Psoas muscle (tissue), 8 donors: ENCODE measurements at regions of chr11 and their contacts with region 1.

Region 1: GRCh38 chr11:63916837-63917691 is at the start of gene RCOR2:
- DNase-seq: peak; percentile 80 to 88
- ATAC-seq: peak; percentile 48 to 71 (median 68)
- H3K4me3 ChIP-seq: peak within 1 kb of the TSS; percentile 73
- H3K27ac ChIP-seq: peak within 1 kb of the TSS; percentile 85
- H3K4me1 ChIP-seq: peaks cover 33% of the 10 kb centered on the region
- H3K27me3 ChIP-seq: no peaks in the 10 kb centered on the region
- CTCF ChIP-seq: no peak
- total RNA-seq, gene RCOR2: 0.25 to 2.1 (median 0.47) TPM

Region 2: GRCh38 chr11:63871962-63872799 is 44.9 kb before region 1 on chr11:
- intact Hi-C with region 1: loop called in 1 of 2 experiments (anchors 5 kb)
- DNase-seq: peak; percentile 78 to 87
- ATAC-seq: peak; percentile 95 to 98 (median 96)
- H3K4me3 ChIP-seq: peak overlapping the region; percentile 39
- H3K27ac ChIP-seq: peak overlapping the region; percentile 77
- H3K4me1 ChIP-seq: peaks cover 60% of the 10 kb centered on the region
- H3K27me3 ChIP-seq: no peaks in the 10 kb centered on the region
- CTCF ChIP-seq: peak; percentile 50

Region 3: GRCh38 chr11:63938479-63939396 is 21.7 kb after region 1 on chr11 and contains the start of gene NAA40:
- intact Hi-C with region 1: loop called in 1 of 2 experiments (anchors 2 kb)
- DNase-seq: peak; percentile 91 to 96
- ATAC-seq: peak; percentile 94 to 98 (median 96)
- H3K4me3 ChIP-seq: peak within 1 kb of the TSS; percentile 79
- H3K27ac ChIP-seq: peak within 1 kb of the TSS; percentile 82
- H3K4me1 ChIP-seq: peaks cover 7% of the 10 kb centered on the region
- H3K27me3 ChIP-seq: no peaks in the 10 kb centered on the region
- CTCF ChIP-seq: no peak
- total RNA-seq, gene NAA40: 5.4 to 13.7 (median 7.8) TPM

Region 4: DNA sequence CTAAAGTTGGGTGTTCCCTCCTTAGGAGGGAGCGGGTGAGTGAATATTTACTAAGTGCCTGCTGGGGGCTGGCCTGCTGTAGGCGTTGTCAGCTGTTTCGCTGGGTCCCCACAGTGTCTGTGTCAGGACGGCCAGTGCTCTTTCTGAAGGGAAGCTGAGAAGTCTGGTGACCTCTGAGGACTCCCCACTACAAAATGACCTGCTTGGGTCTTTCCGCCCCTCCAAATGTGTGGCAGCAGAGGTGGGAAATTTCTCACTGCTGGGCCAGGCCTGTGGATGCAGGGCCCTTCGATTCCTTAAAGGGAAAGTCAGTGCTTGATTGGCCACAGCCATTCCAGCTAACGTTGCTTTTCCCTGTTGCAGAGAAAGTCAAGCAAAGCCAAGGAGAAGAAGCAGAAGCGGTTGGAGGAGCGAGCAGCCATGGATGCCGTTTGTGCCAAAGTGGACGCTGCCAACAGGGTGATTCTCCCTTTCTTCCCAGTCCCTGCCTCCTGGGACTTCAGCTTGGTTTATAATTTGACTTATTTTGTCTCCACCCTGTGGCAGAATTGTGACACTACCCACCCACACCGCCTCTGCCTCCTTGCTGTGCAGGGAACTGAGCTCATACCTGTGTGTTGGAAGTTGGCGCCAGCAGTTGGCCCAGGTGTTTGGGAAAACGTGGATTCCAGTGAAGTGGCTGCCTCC is 28.6 kb after region 1 on chr11:
- intact Hi-C with region 1: loop called in 1 of 2 experiments (anchors 2 kb)
- DNase-seq: peak; percentile 71 to 84
- ATAC-seq: peak; percentile 84 to 92 (median 88)
- H3K4me3 ChIP-seq: peak overlapping the region; percentile 37
- H3K27ac ChIP-seq: peak overlapping the region; percentile 85
- H3K4me1 ChIP-seq: peaks cover 22% of the 10 kb centered on the region
- H3K27me3 ChIP-seq: no peaks in the 10 kb centered on the region
- CTCF ChIP-seq: peak; percentile 77